Caco-2 (cell line): ENCODE measurements at regions of chr13 and their contacts with region 1.

Region 1: DNA sequence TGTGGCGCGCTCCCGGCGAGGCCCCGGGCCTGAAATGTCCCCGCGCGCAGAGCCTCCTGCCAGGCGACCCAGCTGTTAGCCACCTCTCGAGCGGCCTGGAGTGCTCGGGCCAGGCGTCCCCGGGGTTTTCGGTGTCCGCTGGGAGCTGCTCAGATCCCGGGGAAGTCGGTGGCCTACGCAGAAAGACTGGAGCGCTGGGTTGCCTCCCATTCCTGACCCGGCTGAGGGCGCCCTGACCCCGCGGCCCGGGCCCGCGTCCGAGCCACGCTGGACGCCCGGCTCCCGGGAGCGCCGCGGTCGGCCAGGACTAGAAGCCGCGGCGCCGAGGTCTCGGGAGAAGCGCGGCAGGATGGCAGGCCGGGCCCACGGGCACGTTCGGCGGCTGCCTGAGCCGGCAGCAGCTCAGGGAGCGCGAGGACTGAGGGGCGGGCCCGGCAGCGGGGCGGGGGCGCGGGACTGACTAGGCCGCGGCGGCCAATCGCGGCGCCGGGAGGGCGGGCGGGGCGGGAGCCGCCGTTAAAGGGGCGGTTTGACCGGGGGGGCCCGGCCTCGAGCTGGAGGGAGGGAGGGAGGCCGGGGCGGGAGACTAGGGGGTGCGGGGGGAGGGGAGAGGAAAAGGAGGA is 1.3 kb upstream of the ZIC2 start:
- DNase-seq: peak; percentile 70 to 80
- H3K4me3 ChIP-seq: peak overlapping the region; percentile 59
- H3K4me3 Mint-ChIP-seq: peak overlapping the region; percentile 61
- H3K27ac Mint-ChIP-seq: no peak overlapping the region
- H3K4me1 ChIP-seq: peaks cover 24% of the 10 kb centered on the region
- H3K4me1 Mint-ChIP-seq: peaks cover 9% of the 10 kb centered on the region
- H3K27me3 ChIP-seq: peaks cover 16% of the 10 kb centered on the region
- H3K27me3 Mint-ChIP-seq: peaks cover 36% of the 10 kb centered on the region
- CTCF ChIP-seq: peak in 1 of 2 experiments; percentile 24

Region 2: DNA sequence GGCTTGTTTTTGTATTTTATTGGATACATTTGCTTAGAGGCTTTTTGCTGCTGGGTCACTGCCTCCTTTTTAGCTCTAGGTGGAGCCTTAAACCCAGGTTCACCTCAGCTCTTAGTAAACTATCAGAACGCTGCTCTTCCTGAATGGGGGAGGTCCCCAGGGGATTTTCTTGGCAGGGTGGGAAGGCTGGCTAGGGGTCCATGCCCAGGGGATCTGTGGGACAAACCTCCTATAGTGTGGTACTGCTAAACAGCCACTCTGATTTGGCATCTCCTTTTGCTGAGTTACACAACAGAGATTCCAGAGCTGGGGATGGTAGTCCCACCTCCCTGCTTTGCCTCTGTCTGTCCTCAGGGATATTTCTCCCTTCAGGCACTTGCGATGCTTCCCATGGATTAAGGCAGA is 213.7 kb before region 1 on chr13:
- CTCF ChIA-PET with region 1: no interaction called
- POLR2A ChIA-PET with region 1: no interaction called
- intact Hi-C with region 1: loop called (anchors 5 kb)
- DNase-seq: peak in 1 of 2 experiments; percentile 11
- H3K4me3 ChIP-seq: no peak overlapping the region
- H3K4me3 Mint-ChIP-seq: no peak overlapping the region
- H3K27ac Mint-ChIP-seq: no peak overlapping the region
- H3K4me1 ChIP-seq: no peaks in the 10 kb centered on the region
- H3K4me1 Mint-ChIP-seq: no peaks in the 10 kb centered on the region
- H3K27me3 ChIP-seq: no peaks in the 10 kb centered on the region
- H3K27me3 Mint-ChIP-seq: no peaks in the 10 kb centered on the region
- CTCF ChIP-seq: peak; percentile 27 to 32

Region 3: GRCh38 chr13:99922631-99923426 is 57.5 kb before region 1 on chr13:
- CTCF ChIA-PET with region 1: no interaction called
- POLR2A ChIA-PET with region 1: no interaction called
- intact Hi-C with region 1: no loop called
- DNase-seq: no peak
- H3K4me3 ChIP-seq: no peak overlapping the region
- H3K4me3 Mint-ChIP-seq: no peak overlapping the region
- H3K27ac Mint-ChIP-seq: no peak overlapping the region
- H3K4me1 ChIP-seq: no peaks in the 10 kb centered on the region
- H3K4me1 Mint-ChIP-seq: no peaks in the 10 kb centered on the region
- H3K27me3 ChIP-seq: no peaks in the 10 kb centered on the region
- H3K27me3 Mint-ChIP-seq: no peaks in the 10 kb centered on the region
- CTCF ChIP-seq: no peak

Region 4: DNA sequence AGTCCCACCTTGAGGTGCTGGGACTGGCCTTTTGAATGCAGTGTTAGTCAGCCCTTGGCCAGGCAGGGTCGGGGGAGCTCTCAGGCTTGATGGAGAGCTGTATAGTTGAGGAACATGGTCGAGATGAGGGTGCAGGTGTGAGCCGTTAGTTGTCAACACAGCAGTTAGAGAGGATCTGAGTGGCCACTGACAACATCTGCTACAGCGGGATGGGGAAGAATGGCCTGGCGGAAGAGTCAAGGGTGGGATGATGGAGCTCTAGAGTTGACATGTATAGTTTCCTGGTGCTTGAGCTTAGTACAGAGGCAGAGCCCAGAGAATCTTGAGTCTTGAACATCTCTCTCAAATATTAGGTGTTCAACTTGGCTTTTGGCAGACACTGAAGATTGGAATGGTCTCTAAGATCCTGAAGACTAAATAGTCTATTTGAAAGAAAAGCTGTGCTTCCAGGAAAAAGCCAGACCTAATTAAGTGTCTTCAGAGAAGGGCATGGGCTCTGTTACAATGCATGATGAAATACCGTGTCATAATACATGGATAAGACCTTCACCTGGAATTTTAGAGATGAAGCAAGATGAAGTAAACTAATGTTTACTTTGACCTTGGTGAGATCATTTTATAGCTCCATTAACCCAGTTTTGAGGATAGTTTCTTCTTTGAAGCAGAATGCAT is 118.3 kb after region 1 on chr13:
- CTCF ChIA-PET with region 1: no interaction called
- POLR2A ChIA-PET with region 1: no interaction called
- intact Hi-C with region 1: loop called (anchors 1 kb)
- DNase-seq: peak in 1 of 2 experiments; percentile 32
- H3K4me3 ChIP-seq: no peak overlapping the region
- H3K4me3 Mint-ChIP-seq: no peak overlapping the region
- H3K27ac Mint-ChIP-seq: peak overlapping the region; percentile 93
- H3K4me1 ChIP-seq: peaks cover 23% of the 10 kb centered on the region
- H3K4me1 Mint-ChIP-seq: peaks cover 30% of the 10 kb centered on the region
- H3K27me3 ChIP-seq: no peaks in the 10 kb centered on the region
- H3K27me3 Mint-ChIP-seq: no peaks in the 10 kb centered on the region
- CTCF ChIP-seq: no peak